CD14-positive monocyte (primary cell): ENCODE measurements at regions of chr2 and their contacts with region 1.

Region 1: DNA sequence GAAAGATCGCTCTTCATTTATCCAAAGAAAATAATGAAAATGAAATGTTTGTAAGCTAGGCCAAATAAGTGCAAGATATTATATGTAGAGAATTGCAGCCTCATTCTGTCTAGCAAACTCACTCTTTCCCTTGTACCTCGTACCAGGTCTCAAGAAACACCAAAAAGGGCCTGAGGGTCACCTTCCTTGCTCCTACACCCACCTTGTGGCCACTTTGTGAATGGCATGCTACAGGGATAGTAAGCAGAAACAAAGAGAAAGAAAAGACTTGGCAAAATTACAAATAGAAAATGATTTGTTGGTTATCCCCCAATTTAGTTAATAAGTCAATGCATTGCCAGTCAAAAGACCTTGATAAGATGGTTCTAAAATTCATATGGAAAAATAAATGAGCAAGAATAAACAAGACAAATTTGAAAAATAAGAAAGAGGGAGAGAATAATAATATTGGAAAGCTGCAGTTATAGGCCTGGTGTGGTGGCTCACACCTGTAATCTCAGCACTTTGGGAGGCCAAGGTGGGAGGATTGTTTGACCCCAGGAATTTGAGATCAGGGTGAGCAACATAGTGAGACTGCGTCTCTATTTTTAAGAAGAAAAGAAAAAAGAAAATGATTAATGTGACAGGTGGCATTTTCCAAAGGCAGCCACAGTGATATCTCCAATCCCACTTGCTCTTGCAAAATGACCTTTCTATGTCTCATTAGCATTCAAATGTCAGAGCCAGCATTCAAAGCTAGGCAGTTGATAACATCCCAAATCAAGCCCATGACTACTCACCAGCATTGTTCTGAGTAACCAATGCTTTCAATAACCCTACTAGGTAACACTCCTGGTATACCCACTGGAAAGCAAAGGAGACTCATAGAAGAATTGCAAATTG is 38.8 kb upstream of the BMP10 start:
- DNase-seq: peak; percentile 60 to 75 (median 66)
- H3K4me3 ChIP-seq: no peak overlapping the region
- H3K4me3 Mint-ChIP-seq: no peak overlapping the region
- H3K27ac ChIP-seq: no peak overlapping the region
- H3K27ac Mint-ChIP-seq: no peak overlapping the region
- H3K4me1 ChIP-seq: peaks cover 28 to 31% of the 10 kb centered on the region in 2 donors
- H3K4me1 Mint-ChIP-seq: peaks cover 21% of the 10 kb centered on the region
- H3K27me3 ChIP-seq: no peaks in the 10 kb centered on the region
- H3K27me3 Mint-ChIP-seq: peaks cover 0 to 2% (median 0%) of the 10 kb centered on the region in 3 donors
- CTCF ChIP-seq: peak; percentile 95

Region 2: DNA sequence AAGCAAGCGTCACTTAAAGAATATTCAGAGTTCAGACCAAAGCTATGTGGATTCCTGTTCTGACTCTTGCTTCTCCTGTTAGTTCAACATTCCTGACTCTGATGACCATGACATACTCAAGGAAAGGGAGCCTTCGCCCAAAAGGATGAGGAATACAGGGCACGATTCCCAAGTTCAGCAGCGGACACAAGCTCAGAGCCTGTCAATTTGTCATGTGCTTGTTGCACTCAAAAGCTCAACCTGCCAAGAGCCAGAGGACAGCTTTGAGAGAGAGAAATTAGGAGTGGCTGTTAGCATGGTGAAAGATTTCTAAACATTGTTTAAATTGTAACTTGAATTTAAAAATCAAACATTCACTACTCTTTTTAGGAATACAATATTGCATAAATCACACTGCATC is 409.4 kb before region 1 on chr2:
- intact Hi-C with region 1: no loop called
- DNase-seq: no peak
- H3K4me3 ChIP-seq: no peak overlapping the region
- H3K4me3 Mint-ChIP-seq: no peak overlapping the region
- H3K27ac ChIP-seq: no peak overlapping the region
- H3K27ac Mint-ChIP-seq: no peak overlapping the region
- H3K4me1 ChIP-seq: no peaks in the 10 kb centered on the region
- H3K4me1 Mint-ChIP-seq: peaks cover 2% of the 10 kb centered on the region
- H3K27me3 ChIP-seq: no peaks in the 10 kb centered on the region
- H3K27me3 Mint-ChIP-seq: no peaks in the 10 kb centered on the region
- CTCF ChIP-seq: no peak

Region 3: DNA sequence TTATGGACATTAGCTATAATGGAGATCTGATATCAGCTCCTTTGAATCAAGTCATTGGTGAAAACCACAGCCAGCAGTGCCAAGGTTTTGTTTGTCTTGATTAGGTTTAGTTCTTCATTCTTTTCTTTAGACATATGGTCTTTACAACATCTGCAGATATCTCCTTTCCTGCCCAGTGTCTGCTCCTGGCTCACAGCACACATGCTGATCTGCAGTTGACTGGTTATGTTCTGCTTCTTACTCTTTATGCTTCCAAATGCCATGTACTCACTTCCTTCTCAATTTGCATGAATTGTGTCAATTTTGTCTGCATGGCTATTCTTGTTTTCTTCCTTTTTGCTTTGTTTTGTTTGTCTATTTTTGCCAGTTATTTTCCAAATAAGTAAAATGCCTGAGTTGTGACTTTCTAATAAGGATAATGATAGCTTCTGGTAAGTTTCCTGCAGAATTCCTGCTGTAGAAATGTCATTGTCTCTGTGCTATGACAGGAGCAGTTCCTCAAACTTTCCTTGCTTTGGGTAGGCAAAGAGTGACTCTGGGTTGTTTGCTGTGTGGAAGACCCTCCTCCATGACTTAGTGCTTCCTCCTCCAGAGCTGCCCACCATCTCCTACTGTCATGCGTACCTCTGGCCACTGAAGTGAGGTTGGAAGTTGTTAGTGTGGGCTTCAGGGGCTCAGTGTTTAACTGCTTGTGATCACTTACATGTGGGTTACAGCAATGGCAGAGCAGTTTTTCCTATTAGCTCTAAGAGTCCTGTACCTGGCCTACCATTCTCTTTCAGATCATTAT is 167.2 kb before region 1 on chr2:
- intact Hi-C with region 1: loop called in 1 of 2 experiments (anchors 10 kb)
- DNase-seq: peak in 2 of 3 donors; percentile 62 to 65
- H3K4me3 ChIP-seq: peak overlapping the region; percentile 5 to 83 (median 64)
- H3K4me3 Mint-ChIP-seq: peak overlapping the region; percentile 29 to 84
- H3K27ac ChIP-seq: peak overlapping the region; percentile 79 to 96
- H3K27ac Mint-ChIP-seq: peak overlapping the region; percentile 98 to 100 (median 98)
- H3K4me1 ChIP-seq: peaks cover 98 to 100% of the 10 kb centered on the region in 2 donors
- H3K4me1 Mint-ChIP-seq: peaks cover 97% of the 10 kb centered on the region
- H3K27me3 ChIP-seq: no peaks in the 10 kb centered on the region
- H3K27me3 Mint-ChIP-seq: peaks cover 0 to 3% (median 2%) of the 10 kb centered on the region in 3 donors
- CTCF ChIP-seq: no peak

Region 4: DNA sequence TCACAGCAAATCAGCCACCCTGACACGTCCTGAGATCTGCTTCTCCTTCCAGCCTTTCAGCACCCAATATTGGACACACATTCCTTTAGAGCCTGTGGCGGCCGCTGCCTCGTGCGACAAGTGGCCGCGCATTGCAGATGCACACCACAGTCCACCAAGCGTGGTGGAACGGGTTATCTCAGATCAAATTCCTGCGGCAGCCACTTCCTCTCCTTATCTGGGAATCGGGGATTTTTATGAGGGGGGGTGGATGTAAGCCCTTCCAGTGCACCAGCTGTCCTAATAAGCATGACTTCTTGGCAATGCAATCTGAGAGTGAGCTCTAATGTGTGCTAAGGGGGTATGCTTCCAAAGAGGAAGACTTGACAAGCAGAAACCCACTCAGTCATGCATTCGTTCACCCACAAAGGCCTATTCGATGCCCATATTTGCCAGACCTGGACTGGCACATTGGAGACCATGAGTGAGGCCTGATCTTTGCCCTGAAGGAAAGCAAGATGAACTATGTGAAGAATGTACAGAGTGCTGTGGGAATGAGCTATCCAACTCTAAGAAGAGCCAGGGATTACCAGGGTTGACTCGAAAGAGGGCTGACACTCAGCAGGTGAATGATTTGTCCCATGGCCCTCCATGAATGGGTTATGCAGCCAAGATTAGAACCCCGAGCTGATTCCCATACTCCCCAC is 20.4 kb before region 1 on chr2:
- intact Hi-C with region 1: no loop called
- DNase-seq: no peak
- H3K4me3 ChIP-seq: no peak overlapping the region
- H3K4me3 Mint-ChIP-seq: no peak overlapping the region
- H3K27ac ChIP-seq: no peak overlapping the region
- H3K27ac Mint-ChIP-seq: peak overlapping the region in 1 of 7 donors; percentile 33
- H3K4me1 ChIP-seq: no peaks in the 10 kb centered on the region
- H3K4me1 Mint-ChIP-seq: peaks cover 2% of the 10 kb centered on the region
- H3K27me3 ChIP-seq: no peaks in the 10 kb centered on the region
- H3K27me3 Mint-ChIP-seq: peaks cover 0 to 4% (median 0%) of the 10 kb centered on the region in 3 donors
- CTCF ChIP-seq: no peak

Region 5: GRCh38 chr2:69291004-69291650 is 381.1 kb after region 1 on chr2:
- intact Hi-C with region 1: no loop called
- DNase-seq: no peak
- H3K4me3 ChIP-seq: no peak overlapping the region
- H3K4me3 Mint-ChIP-seq: no peak overlapping the region
- H3K27ac ChIP-seq: no peak overlapping the region
- H3K27ac Mint-ChIP-seq: no peak overlapping the region
- H3K4me1 ChIP-seq: no peaks in the 10 kb centered on the region
- H3K4me1 Mint-ChIP-seq: peaks cover 1% of the 10 kb centered on the region
- H3K27me3 ChIP-seq: no peaks in the 10 kb centered on the region
- H3K27me3 Mint-ChIP-seq: no peaks in the 10 kb centered on the region
- CTCF ChIP-seq: no peak